MCF 10A (cell line): ENCODE measurements at regions of chr12 and their contacts with region 1.

Region 1: GRCh38 chr12:29782285-29782870 is 1.4 kb downstream of the TMTC1 start:
- DNase-seq: peak; percentile 86
- H3K4me3 Mint-ChIP-seq: peak overlapping the region; percentile 91
- H3K27ac Mint-ChIP-seq: peak overlapping the region; percentile 88
- H3K4me1 Mint-ChIP-seq: peaks cover 19% of the 10 kb centered on the region
- H3K27me3 Mint-ChIP-seq: no peaks in the 10 kb centered on the region
- CTCF ChIP-seq: no peak

Region 2: GRCh38 chr12:29552324-29552927 is 230.0 kb before region 1 on chr12:
- CTCF ChIA-PET with region 1: interaction called, 3 read pairs
- POLR2A ChIA-PET with region 1: no interaction called
- intact Hi-C with region 1: loop called (anchors 2 kb)
- DNase-seq: peak; percentile 68
- H3K4me3 Mint-ChIP-seq: no peak overlapping the region
- H3K27ac Mint-ChIP-seq: no peak overlapping the region
- H3K4me1 Mint-ChIP-seq: no peaks in the 10 kb centered on the region
- H3K27me3 Mint-ChIP-seq: no peaks in the 10 kb centered on the region
- CTCF ChIP-seq: peak; percentile 89

Region 3: DNA sequence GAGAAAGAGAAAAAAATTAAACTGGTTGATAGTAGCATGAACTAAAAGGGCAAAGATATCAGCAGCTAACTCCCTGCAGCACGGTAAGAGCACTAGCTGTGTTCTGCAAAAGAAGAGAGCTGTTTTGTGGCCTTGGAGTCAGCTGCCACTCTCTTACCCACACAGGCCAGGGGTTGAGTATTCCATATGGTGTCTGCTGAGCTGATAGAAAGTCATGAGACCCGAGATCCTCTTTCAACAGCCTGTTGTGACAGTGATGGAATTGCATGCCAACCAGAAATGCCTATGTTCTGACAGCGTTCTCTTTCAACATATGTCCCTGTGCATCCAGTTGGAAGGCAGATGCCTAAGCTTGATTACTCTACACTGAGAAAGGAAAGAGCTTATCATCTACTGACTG is 38.6 kb before region 1 on chr12:
- CTCF ChIA-PET with region 1: interaction called, 3 read pairs
- POLR2A ChIA-PET with region 1: interaction called, 64 read pairs
- intact Hi-C with region 1: loop called (anchors 1 kb)
- DNase-seq: peak; percentile 95
- H3K4me3 Mint-ChIP-seq: peak overlapping the region; percentile 62
- H3K27ac Mint-ChIP-seq: peak overlapping the region; percentile 97
- H3K4me1 Mint-ChIP-seq: peaks cover 33% of the 10 kb centered on the region
- H3K27me3 Mint-ChIP-seq: no peaks in the 10 kb centered on the region
- CTCF ChIP-seq: no peak

Region 4: DNA sequence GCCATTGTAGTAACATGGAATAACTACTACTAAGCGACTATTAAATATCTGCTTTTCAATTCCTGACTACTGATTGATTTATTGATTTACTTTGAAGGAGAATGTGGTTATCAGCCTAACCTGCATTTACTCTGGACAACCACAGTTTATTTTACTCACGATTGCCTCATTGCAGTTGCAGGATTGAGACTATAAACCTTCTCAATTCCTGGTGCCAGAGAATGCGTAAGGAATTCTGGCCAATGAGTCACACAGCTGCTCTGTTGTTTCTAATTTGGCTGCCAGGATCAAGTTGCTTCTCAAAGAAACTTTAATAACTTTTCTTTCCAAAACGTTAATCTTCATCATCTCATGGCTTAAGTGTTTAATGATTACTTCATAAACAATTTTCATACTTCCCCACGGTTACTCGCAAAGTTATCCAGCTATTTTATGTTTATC is 14.5 kb after region 1 on chr12:
- CTCF ChIA-PET with region 1: interaction called, 4 read pairs
- POLR2A ChIA-PET with region 1: interaction called, 36 read pairs
- intact Hi-C with region 1: no loop called
- DNase-seq: peak; percentile 89
- H3K4me3 Mint-ChIP-seq: peak overlapping the region; percentile 15
- H3K27ac Mint-ChIP-seq: peak overlapping the region; percentile 88
- H3K4me1 Mint-ChIP-seq: peaks cover 20% of the 10 kb centered on the region
- H3K27me3 Mint-ChIP-seq: no peaks in the 10 kb centered on the region
- CTCF ChIP-seq: no peak

Region 5: DNA sequence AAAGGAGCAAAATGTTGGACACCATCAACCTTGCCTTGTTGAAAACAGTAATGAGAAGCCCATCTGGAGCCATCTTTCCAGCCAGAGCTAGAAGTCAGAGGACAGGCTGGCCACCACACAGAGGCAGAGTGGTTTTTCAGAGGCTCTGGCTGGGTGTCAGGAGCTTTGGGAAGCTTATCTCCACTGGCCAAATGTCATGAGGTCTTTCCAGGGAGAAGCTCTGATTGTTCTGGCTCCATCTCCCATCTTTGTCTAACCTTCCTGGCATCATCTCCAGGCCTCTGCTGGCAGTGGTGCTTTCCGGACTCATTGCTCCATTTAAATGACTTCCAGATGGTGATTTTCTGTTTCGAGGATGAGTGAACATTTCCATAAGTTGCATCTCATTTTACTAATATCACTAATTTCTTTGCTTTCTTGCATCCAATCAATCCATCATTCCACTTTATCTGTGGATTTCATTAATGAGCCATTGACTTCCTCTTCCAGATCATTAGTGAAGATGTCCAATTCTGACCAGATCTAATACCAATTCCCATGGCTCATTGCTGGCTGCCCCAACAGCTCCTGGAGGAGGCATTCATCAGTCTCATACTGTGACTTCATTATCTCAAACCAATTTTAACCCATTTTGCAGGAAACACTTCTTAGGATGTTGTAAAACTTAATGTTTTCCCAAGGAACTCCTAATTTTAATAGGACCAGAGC is 36.7 kb after region 1 on chr12:
- CTCF ChIA-PET with region 1: no interaction called
- POLR2A ChIA-PET with region 1: no interaction called
- intact Hi-C with region 1: no loop called
- DNase-seq: no peak
- H3K4me3 Mint-ChIP-seq: no peak overlapping the region
- H3K27ac Mint-ChIP-seq: no peak overlapping the region
- H3K4me1 Mint-ChIP-seq: no peaks in the 10 kb centered on the region
- H3K27me3 Mint-ChIP-seq: no peaks in the 10 kb centered on the region
- CTCF ChIP-seq: no peak

Region 6: GRCh38 chr12:30134229-30134628 is 351.9 kb after region 1 on chr12:
- CTCF ChIA-PET with region 1: no interaction called
- POLR2A ChIA-PET with region 1: no interaction called
- intact Hi-C with region 1: loop called (anchors 2 kb)
- DNase-seq: peak; percentile 63
- H3K4me3 Mint-ChIP-seq: no peak overlapping the region
- H3K27ac Mint-ChIP-seq: no peak overlapping the region
- H3K4me1 Mint-ChIP-seq: peaks cover 6% of the 10 kb centered on the region
- H3K27me3 Mint-ChIP-seq: no peaks in the 10 kb centered on the region
- CTCF ChIP-seq: peak; percentile 37